Activated naive CD4-positive, alpha-beta T cell treated with anti-CD3 and anti-CD28 coated beads for 36 hours (primary cell): ENCODE measurements at regions of chr3 and their contacts with region 1.

Region 1: GRCh38 chr3:185308126-185308754 is 54.4 kb upstream of the EHHADH start:
- DNase-seq: peak; percentile 74
- H3K4me3 Mint-ChIP-seq: no peak overlapping the region
- H3K27ac Mint-ChIP-seq: no peak overlapping the region
- H3K4me1 Mint-ChIP-seq: no peaks in the 10 kb centered on the region
- H3K27me3 Mint-ChIP-seq: no peaks in the 10 kb centered on the region

Region 2: DNA sequence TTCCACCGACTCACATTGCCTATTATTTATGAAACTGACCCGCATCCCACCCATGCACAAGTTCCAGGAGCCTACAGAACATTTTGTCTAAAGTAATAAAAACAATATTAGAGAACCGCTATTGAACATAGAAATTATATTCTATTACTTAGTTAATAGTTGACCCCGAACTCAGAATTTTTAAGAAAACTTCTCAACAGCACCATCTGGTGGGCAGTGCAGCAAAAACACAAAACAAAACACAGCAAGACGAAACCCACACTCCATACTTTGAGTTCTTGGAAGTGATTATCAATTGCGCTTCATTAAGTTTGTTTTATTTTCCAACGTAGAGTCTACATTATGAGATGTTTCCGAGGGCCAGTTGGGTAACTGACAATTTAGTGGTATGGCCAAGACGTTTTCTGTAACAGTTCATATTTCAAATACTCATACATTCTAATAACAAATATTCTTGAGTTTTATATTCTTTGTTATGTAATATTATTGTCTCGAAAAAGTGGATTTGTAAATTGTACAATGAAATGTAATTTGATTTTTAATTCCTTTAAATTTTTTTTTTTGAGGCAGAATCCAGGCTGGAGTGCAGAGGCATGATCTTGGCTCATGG is 131.4 kb before region 1 on chr3:
- CTCF ChIA-PET with region 1: interaction called, 4 read pairs
- intact Hi-C with region 1: loop called (anchors 2 kb)
- DNase-seq: peak; percentile 58
- H3K4me3 Mint-ChIP-seq: no peak overlapping the region
- H3K27ac Mint-ChIP-seq: no peak overlapping the region
- H3K4me1 Mint-ChIP-seq: no peaks in the 10 kb centered on the region
- H3K27me3 Mint-ChIP-seq: peaks cover 6% of the 10 kb centered on the region

Region 3: DNA sequence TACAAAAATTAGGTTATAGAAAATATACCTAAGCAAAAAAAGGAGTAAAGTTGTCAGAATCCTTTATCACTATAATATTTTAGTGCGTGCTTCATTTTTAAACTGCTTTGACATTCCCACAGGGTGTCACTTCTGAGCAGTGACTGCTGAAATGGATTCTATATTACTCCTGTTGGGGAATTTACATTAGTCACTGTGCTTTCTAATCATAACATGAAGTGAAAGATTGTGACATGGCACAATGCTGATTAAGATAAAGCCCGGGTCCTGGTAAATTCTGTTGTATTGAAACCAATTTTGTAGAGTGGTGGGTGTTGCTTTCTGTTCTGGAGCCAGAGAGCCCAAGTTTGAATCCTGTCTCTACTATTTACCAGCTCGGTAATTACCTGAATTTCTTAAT is 18.0 kb before region 1 on chr3:
- CTCF ChIA-PET with region 1: interaction called, 5 read pairs
- intact Hi-C with region 1: loop called (anchors 1 kb)
- DNase-seq: peak; percentile 26
- H3K4me3 Mint-ChIP-seq: no peak overlapping the region
- H3K27ac Mint-ChIP-seq: no peak overlapping the region
- H3K4me1 Mint-ChIP-seq: no peaks in the 10 kb centered on the region
- H3K27me3 Mint-ChIP-seq: no peaks in the 10 kb centered on the region